GM12878 (cell line): ENCODE measurements at regions of chr22 and their contacts with region 1.

Region 1: DNA sequence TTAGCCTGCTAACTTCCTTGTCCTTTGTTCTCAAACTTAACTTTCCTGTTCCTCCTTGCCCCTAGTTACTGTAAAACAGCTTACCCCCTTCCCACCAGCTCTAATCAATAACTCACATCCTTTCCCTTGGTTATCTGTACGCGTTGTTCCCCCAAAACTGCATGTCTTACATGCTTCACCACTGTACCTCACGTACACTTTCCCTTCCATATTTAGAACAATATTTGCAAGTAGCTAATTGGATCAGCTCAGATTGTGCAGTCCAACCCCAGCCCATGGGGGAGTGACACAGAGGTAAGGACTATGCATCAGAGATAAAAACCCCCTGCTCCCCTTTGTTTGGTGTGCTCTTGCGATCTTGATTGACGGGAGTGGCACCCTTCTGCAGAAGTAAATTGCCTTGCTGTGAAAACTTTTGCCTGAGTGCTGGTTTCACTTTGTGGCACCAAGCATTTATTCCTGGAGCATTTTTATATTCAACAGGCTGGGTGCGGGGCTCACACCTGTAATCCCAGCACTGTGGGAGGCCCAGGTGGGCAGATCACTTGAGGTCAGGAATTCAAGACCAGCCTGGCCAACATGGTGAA is 30.9 kb downstream of the MIF start:
- DNase-seq: no peak
- ATAC-seq: no peak
- H3K4me3 ChIP-seq: no peak overlapping the region
- H3K27ac ChIP-seq: no peak overlapping the region
- H3K4me1 ChIP-seq: no peaks in the 10 kb centered on the region
- H3K27me3 ChIP-seq: no peaks in the 10 kb centered on the region
- CTCF ChIP-seq: no peak
- EP300 ChIP-seq: no peak
- POLR2A ChIP-seq: no peak
- RAD21 ChIP-seq: no peak

Region 2: DNA sequence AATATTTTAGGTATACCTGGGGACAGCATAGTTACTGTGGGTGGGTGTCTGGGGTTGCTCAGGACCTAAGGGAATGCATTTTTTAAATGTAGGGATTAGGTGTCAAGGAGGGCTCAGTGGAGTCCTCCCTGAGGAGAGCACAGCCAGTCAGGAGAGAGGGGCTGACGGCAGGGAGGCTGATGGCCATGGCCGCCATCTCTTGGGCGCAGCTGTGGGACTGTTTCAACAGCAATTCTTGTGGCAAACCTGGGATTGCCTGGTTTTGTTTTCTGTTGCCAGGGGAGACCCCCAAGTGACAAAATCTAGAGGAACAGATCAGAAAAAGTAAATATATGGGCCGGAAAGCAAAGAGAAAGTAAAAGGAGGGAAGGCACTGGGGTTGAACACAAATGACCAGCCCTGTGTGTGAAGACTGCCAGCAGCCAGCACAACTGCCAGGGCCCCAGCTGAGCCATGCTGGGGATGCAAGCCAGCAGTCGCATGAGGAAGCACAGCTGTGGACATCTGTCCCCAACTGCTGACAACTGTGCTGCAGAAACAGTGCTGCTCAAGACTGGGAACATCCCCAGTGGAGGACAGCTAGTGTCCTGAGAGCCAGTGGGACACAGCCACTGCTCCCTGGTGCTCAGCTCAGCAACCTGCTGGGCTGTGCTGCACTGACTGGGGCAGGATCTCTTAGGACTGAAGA is 20.4 kb before region 1 on chr22:
- CTCF ChIA-PET with region 1: no interaction called
- POLR2A ChIA-PET with region 1: no interaction called
- RAD21 ChIA-PET with region 1: no interaction called
- SMC1A ChIA-PET with region 1: no interaction called
- in situ Hi-C with region 1: no loop called
- intact Hi-C with region 1: no loop called
- DNase-seq: no peak
- ATAC-seq: no peak
- H3K4me3 ChIP-seq: no peak overlapping the region
- H3K27ac ChIP-seq: no peak overlapping the region
- H3K4me1 ChIP-seq: no peaks in the 10 kb centered on the region
- H3K27me3 ChIP-seq: no peaks in the 10 kb centered on the region
- CTCF ChIP-seq: no peak
- EP300 ChIP-seq: no peak
- POLR2A ChIP-seq: no peak
- RAD21 ChIP-seq: no peak

Region 3: DNA sequence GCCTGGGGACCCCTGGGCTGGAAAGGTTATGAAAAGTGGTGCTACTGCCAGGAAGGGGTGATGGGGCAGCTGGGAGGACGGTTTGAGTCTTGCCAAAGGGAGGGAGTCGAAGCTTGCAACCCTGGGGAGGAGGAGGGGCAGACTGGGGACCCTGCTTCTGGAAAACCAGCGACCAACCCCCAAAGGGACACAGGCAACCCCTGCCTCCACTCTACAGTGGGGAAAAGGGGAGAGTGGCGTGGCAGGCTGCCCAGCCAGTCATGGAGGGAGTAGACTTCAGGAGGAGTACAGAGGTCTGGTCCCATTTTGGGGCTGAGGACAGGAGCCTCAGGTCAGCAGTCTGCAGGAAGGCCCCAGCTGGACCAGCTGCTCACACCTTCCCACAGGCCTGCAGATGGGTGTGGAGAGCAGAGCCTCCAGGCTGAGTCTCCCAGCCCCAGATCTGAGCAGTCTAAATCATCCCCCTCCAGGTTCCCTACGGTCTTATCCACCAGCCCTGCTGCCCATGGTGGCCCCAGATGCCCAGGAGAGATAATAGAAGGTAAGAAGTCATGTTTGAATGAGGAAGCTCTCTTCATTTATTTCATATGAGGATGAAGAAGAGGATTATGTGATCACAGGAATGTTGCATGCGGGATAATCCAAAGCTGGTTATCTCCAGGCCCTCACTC is 45.8 kb after region 1 on chr22:
- CTCF ChIA-PET with region 1: no interaction called
- POLR2A ChIA-PET with region 1: no interaction called
- RAD21 ChIA-PET with region 1: no interaction called
- SMC1A ChIA-PET with region 1: no interaction called
- in situ Hi-C with region 1: loop called (anchors 5 kb)
- intact Hi-C with region 1: loop called (anchors 5 kb)
- DNase-seq: no peak
- ATAC-seq: no peak
- H3K4me3 ChIP-seq: no peak overlapping the region
- H3K27ac ChIP-seq: no peak overlapping the region
- H3K4me1 ChIP-seq: no peaks in the 10 kb centered on the region
- H3K27me3 ChIP-seq: no peaks in the 10 kb centered on the region
- CTCF ChIP-seq: no peak
- EP300 ChIP-seq: no peak
- POLR2A ChIP-seq: no peak
- RAD21 ChIP-seq: no peak

Region 4: DNA sequence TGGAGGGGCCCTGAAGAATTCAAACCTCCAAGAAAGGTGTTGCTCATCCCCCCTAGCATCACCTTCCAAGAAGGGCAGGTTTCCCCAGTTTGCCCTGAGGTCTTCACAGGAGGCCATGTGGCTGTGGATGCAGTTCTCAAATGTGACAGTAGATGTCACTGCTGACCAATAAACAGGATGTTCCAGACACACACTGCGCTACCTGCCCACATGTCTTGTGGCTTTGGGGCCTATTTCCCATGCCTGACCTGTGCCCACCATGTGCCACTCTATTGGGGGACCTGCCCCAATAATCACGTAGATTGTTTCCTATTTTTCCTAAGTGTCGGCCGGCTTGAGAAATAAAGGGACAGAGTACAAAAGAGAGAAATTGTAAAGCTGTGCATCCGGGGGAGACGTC is 59.3 kb after region 1 on chr22:
- CTCF ChIA-PET with region 1: no interaction called
- POLR2A ChIA-PET with region 1: no interaction called
- RAD21 ChIA-PET with region 1: no interaction called
- SMC1A ChIA-PET with region 1: no interaction called
- in situ Hi-C with region 1: no loop called
- intact Hi-C with region 1: no loop called
- DNase-seq: no peak
- ATAC-seq: no peak
- H3K4me3 ChIP-seq: no peak overlapping the region
- H3K27ac ChIP-seq: no peak overlapping the region
- H3K4me1 ChIP-seq: no peaks in the 10 kb centered on the region
- H3K27me3 ChIP-seq: no peaks in the 10 kb centered on the region
- CTCF ChIP-seq: no peak
- EP300 ChIP-seq: no peak
- POLR2A ChIP-seq: no peak
- RAD21 ChIP-seq: no peak